GM12878 (cell line): ENCODE measurements at regions of chr2 and their contacts with region 1.

Region 1: GRCh38 chr2:84925724-84926376 is 20.4 kb downstream of the TMSB10 start:
- DNase-seq: peak; percentile 92
- ATAC-seq: peak; percentile 82
- H3K4me3 ChIP-seq: peak overlapping the region; percentile 71
- H3K27ac ChIP-seq: peak overlapping the region; percentile 80
- H3K4me1 ChIP-seq: peaks cover 25% of the 10 kb centered on the region
- H3K27me3 ChIP-seq: no peaks in the 10 kb centered on the region
- CTCF ChIP-seq: peak; percentile 97 to 100 (median 100); a peak in 5 of 6 replicates
- EP300 ChIP-seq: no peak
- POLR2A ChIP-seq: peak; percentile 70
- RAD21 ChIP-seq: peak; percentile 89

Region 2: GRCh38 chr2:84741296-84741765 is 184.5 kb before region 1 on chr2:
- CTCF ChIA-PET with region 1: interaction called, 17 read pairs
- POLR2A ChIA-PET with region 1: no interaction called
- RAD21 ChIA-PET with region 1: interaction called, 17 read pairs
- SMC1A ChIA-PET with region 1: interaction called, 12 read pairs
- in situ Hi-C with region 1: no loop called
- intact Hi-C with region 1: no loop called
- DNase-seq: no peak
- ATAC-seq: peak; percentile 100
- H3K4me3 ChIP-seq: no peak overlapping the region
- H3K27ac ChIP-seq: no peak overlapping the region
- H3K4me1 ChIP-seq: no peaks in the 10 kb centered on the region
- H3K27me3 ChIP-seq: no peaks in the 10 kb centered on the region; a peak in 1 of 4 replicates
- CTCF ChIP-seq: peak; percentile 58 to 74 (median 59)
- EP300 ChIP-seq: no peak
- POLR2A ChIP-seq: no peak
- RAD21 ChIP-seq: peak; percentile 39; the same call in 1 of the 2 replicates

Region 3: GRCh38 chr2:84865181-84865783 is 60.6 kb before region 1 on chr2:
- CTCF ChIA-PET with region 1: interaction called, 64 read pairs
- POLR2A ChIA-PET with region 1: no interaction called
- RAD21 ChIA-PET with region 1: interaction called, 40 read pairs
- SMC1A ChIA-PET with region 1: interaction called, 27 read pairs
- in situ Hi-C with region 1: no loop called
- intact Hi-C with region 1: loop called (anchors 1 kb)
- DNase-seq: no peak
- ATAC-seq: peak; percentile 87
- H3K4me3 ChIP-seq: no peak overlapping the region
- H3K27ac ChIP-seq: no peak overlapping the region
- H3K4me1 ChIP-seq: no peaks in the 10 kb centered on the region
- H3K27me3 ChIP-seq: no peaks in the 10 kb centered on the region
- CTCF ChIP-seq: peak; percentile 41 to 75 (median 61); a peak in 4 of 6 replicates
- EP300 ChIP-seq: no peak
- POLR2A ChIP-seq: no peak
- RAD21 ChIP-seq: peak; percentile 73

Region 4: GRCh38 chr2:84894758-84895520 is 30.9 kb before region 1 on chr2:
- CTCF ChIA-PET with region 1: interaction called, 32 read pairs
- POLR2A ChIA-PET with region 1: interaction called, 10 read pairs
- RAD21 ChIA-PET with region 1: interaction called, 43 read pairs
- SMC1A ChIA-PET with region 1: interaction called, 31 read pairs
- in situ Hi-C with region 1: no loop called
- intact Hi-C with region 1: no loop called
- DNase-seq: no peak
- ATAC-seq: peak; percentile 17
- H3K4me3 ChIP-seq: no peak overlapping the region
- H3K27ac ChIP-seq: peak overlapping the region; percentile 4; the same call in 1 of the 2 replicates
- H3K4me1 ChIP-seq: peaks cover 34% of the 10 kb centered on the region
- H3K27me3 ChIP-seq: no peaks in the 10 kb centered on the region
- CTCF ChIP-seq: no peak
- EP300 ChIP-seq: no peak
- POLR2A ChIP-seq: no peak
- RAD21 ChIP-seq: no peak

Region 5: DNA sequence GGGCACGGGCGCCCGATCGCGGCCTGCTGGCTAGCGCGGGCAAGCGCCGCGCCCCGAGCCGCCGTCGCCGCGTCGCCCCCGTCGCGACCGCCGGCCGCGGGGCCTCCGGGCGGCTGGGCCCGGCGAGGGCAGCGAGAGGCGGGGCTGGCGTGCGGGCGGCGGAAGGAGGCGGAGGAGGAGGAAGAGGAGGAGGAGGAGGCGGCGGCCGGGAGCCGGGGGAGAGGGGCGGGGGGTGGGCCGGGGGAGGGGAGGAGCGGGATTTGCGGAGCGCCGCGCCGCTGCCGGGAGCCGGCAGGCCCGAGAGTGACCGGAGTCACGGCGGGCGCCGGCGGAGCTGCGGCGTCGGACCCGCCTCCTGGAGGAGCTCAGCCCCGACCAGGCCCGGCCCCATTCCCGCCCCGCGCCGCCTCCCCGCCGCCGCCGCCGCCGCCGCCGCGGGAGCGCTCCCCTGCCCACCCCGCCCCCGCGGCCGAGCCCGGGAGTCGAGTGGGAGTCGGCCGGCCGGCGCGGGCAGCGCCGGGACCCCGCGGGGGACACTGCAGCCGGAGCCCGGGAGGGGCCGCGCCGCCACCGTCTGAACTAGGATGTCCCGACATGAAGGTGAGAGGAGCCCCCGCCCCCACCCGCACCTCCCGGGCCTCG is 45.1 kb after region 1 on chr2 and contains the start of gene KCMF1:
- CTCF ChIA-PET with region 1: interaction called, 32 read pairs
- POLR2A ChIA-PET with region 1: interaction called, 12 read pairs
- RAD21 ChIA-PET with region 1: interaction called, 65 read pairs
- SMC1A ChIA-PET with region 1: interaction called, 378 read pairs
- in situ Hi-C with region 1: no loop called
- intact Hi-C with region 1: loop called (anchors 2 kb)
- DNase-seq: no peak
- ATAC-seq: peak; percentile 41
- H3K4me3 ChIP-seq: peak within 1 kb of the TSS; percentile 85
- H3K27ac ChIP-seq: peak within 1 kb of the TSS; percentile 93
- H3K4me1 ChIP-seq: no peaks in the 10 kb centered on the region
- H3K27me3 ChIP-seq: no peaks in the 10 kb centered on the region
- CTCF ChIP-seq: no peak
- EP300 ChIP-seq: no peak
- POLR2A ChIP-seq: peak; percentile 61
- RAD21 ChIP-seq: no peak
- polyA plus RNA-seq, gene KCMF1: 8.4 to 9.8 TPM

Region 6: GRCh38 chr2:85017411-85018048 is 91.7 kb after region 1 on chr2:
- CTCF ChIA-PET with region 1: interaction called, 14 read pairs
- POLR2A ChIA-PET with region 1: interaction called, 4 read pairs
- RAD21 ChIA-PET with region 1: interaction called, 52 read pairs
- SMC1A ChIA-PET with region 1: interaction called, 36 read pairs
- in situ Hi-C with region 1: loop called (anchors 5 kb)
- intact Hi-C with region 1: loop called (anchors 1 kb)
- DNase-seq: no peak
- ATAC-seq: 0 out of 3 replicates have a peak, but pooled peaks have one; percentile 20
- H3K4me3 ChIP-seq: no peak overlapping the region
- H3K27ac ChIP-seq: no peak overlapping the region
- H3K4me1 ChIP-seq: peaks cover 13% of the 10 kb centered on the region; the same call in 1 of the 2 replicates
- H3K27me3 ChIP-seq: no peaks in the 10 kb centered on the region
- CTCF ChIP-seq: peak in 2 of 3 experiments; percentile 3 to 23; a peak in 2 of 6 replicates
- EP300 ChIP-seq: no peak
- POLR2A ChIP-seq: no peak
- RAD21 ChIP-seq: no peak

Region 7: GRCh38 chr2:85302121-85302520 is 376.3 kb after region 1 on chr2:
- CTCF ChIA-PET with region 1: interaction called, 24 read pairs
- POLR2A ChIA-PET with region 1: no interaction called
- RAD21 ChIA-PET with region 1: interaction called, 14 read pairs
- SMC1A ChIA-PET with region 1: interaction called, 18 read pairs
- in situ Hi-C with region 1: no loop called
- intact Hi-C with region 1: no loop called
- DNase-seq: no peak
- ATAC-seq: no peak
- H3K4me3 ChIP-seq: no peak overlapping the region
- H3K27ac ChIP-seq: no peak overlapping the region
- H3K4me1 ChIP-seq: no peaks in the 10 kb centered on the region
- H3K27me3 ChIP-seq: peaks cover 0 to 2% of the 10 kb centered on the region in 2 experiments; a peak in 2 of 4 replicates
- CTCF ChIP-seq: no peak
- EP300 ChIP-seq: no peak
- POLR2A ChIP-seq: no peak
- RAD21 ChIP-seq: no peak